Natural killer cell (primary cell): ENCODE measurements at regions of chr10 and their contacts with region 1.

Region 1: GRCh38 chr10:35126530-35127296 is at the start of gene CREM:
- DNase-seq: peak; percentile 98 to 99
- ATAC-seq: peak; percentile 81 to 94 (median 83)
- H3K4me3 ChIP-seq: peak within 1 kb of the TSS; percentile 98
- H3K4me3 Mint-ChIP-seq: peak within 1 kb of the TSS; percentile 93
- H3K27ac ChIP-seq: peak within 1 kb of the TSS; percentile 98
- H3K27ac Mint-ChIP-seq: peak within 1 kb of the TSS; percentile 97 to 98
- H3K4me1 ChIP-seq: peaks cover 21% of the 10 kb centered on the region
- H3K4me1 Mint-ChIP-seq: peaks cover 24% of the 10 kb centered on the region in 2 donors
- H3K27me3 ChIP-seq: no peaks in the 10 kb centered on the region
- H3K27me3 Mint-ChIP-seq: no peaks in the 10 kb centered on the region
- CTCF ChIP-seq: peak; percentile 72
- total RNA-seq, gene CREM: 48.0 to 64.3 (median 54.6) TPM

Region 2: GRCh38 chr10:34434119-34434594 is 692.6 kb before region 1 on chr10:
- intact Hi-C with region 1: no loop called
- DNase-seq: no peak
- ATAC-seq: no peak
- H3K4me3 ChIP-seq: no peak overlapping the region
- H3K4me3 Mint-ChIP-seq: no peak overlapping the region
- H3K27ac ChIP-seq: no peak overlapping the region
- H3K27ac Mint-ChIP-seq: no peak overlapping the region
- H3K4me1 ChIP-seq: no peaks in the 10 kb centered on the region
- H3K4me1 Mint-ChIP-seq: peaks cover 9% of the 10 kb centered on the region in 2 donors
- H3K27me3 ChIP-seq: no peaks in the 10 kb centered on the region
- H3K27me3 Mint-ChIP-seq: peaks cover 11 to 24% of the 10 kb centered on the region in 2 donors
- CTCF ChIP-seq: no peak

Region 3: DNA sequence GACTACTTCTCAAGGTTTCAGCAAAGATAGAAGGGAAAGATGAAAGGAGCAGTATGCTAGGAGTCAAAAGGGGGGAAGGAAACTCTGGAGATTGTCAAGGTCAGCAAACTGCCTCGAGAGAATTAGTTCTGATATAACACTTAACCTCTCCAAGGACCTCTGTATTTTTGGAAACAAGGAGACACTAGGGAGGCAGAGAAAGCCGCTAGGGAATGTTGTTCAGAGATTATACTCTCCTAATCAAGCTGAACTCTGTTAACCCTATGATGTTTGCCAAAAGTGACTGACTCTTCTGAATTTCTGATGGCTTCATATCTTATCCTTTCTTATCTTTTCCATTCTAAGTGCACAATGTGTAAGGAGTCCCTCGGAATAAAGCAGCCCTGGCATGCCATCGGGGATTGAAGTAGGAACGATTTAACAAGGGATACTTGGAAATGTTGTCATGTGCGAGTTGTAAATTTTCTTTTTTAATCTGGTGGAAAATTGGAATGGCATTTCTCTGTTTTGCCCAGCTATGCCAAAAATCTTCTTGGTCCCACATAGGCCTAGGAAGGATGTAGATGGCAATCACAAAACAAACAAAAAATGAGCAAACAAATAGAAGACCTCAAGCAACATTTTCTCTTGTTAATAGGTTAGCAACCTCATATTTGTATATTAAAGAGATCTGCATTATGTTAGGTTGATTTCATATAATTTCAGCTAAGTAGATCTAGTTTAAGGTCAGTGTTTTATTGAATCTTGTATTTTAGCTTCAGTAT is 27.2 kb after region 1 on chr10:
- intact Hi-C with region 1: loop called (anchors 2 kb)
- DNase-seq: no peak
- ATAC-seq: no peak
- H3K4me3 ChIP-seq: no peak overlapping the region
- H3K4me3 Mint-ChIP-seq: no peak overlapping the region
- H3K27ac ChIP-seq: no peak overlapping the region
- H3K27ac Mint-ChIP-seq: no peak overlapping the region
- H3K4me1 ChIP-seq: peaks cover 17% of the 10 kb centered on the region
- H3K4me1 Mint-ChIP-seq: peaks cover 18 to 21% of the 10 kb centered on the region in 2 donors
- H3K27me3 ChIP-seq: no peaks in the 10 kb centered on the region
- H3K27me3 Mint-ChIP-seq: no peaks in the 10 kb centered on the region
- CTCF ChIP-seq: no peak

Region 4: GRCh38 chr10:35218339-35218955 is 91.7 kb after region 1 on chr10:
- intact Hi-C with region 1: loop called (anchors 1 kb)
- DNase-seq: peak; percentile 73 to 94
- ATAC-seq: peak; percentile 53 to 80 (median 68)
- H3K4me3 ChIP-seq: no peak overlapping the region
- H3K4me3 Mint-ChIP-seq: peak overlapping the region; percentile 81
- H3K27ac ChIP-seq: peak overlapping the region; percentile 46
- H3K27ac Mint-ChIP-seq: peak overlapping the region; percentile 91 to 96
- H3K4me1 ChIP-seq: peaks cover 35% of the 10 kb centered on the region
- H3K4me1 Mint-ChIP-seq: peaks cover 40 to 42% of the 10 kb centered on the region in 2 donors
- H3K27me3 ChIP-seq: no peaks in the 10 kb centered on the region
- H3K27me3 Mint-ChIP-seq: no peaks in the 10 kb centered on the region
- CTCF ChIP-seq: peak; percentile 77

Region 5: DNA sequence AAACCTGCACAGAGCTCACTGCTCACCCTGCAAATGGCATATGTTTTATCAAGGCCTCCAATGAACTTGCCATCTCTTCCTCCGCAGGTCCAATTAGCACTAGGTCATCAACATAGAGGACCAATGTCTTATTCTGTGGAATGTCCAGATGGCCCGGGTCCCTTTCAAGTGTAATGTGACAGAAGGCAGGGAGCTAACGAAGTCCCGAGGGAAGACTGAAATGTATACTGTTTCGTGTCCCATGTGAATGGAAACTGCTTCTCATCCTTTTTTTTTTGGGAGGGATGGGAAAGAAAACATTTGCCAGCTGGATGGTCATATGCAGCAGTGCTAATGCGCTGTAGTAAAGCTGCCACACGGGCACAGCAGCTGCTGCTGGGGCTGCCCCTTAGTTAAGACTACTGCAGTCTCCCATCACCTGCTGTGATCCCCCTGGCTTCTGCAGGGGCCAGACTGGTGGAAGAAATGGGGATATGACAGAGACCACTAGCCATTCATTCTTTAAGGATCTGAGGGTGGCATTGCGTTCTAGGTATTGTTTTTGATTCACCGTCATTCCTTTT is 147.9 kb after region 1 on chr10:
- intact Hi-C with region 1: no loop called
- DNase-seq: no peak
- ATAC-seq: no peak
- H3K4me3 ChIP-seq: no peak overlapping the region
- H3K4me3 Mint-ChIP-seq: no peak overlapping the region
- H3K27ac ChIP-seq: no peak overlapping the region
- H3K27ac Mint-ChIP-seq: no peak overlapping the region
- H3K4me1 ChIP-seq: no peaks in the 10 kb centered on the region
- H3K4me1 Mint-ChIP-seq: no peaks in the 10 kb centered on the region
- H3K27me3 ChIP-seq: no peaks in the 10 kb centered on the region
- H3K27me3 Mint-ChIP-seq: peaks cover 0 to 7% of the 10 kb centered on the region in 2 donors
- CTCF ChIP-seq: no peak

Region 6: DNA sequence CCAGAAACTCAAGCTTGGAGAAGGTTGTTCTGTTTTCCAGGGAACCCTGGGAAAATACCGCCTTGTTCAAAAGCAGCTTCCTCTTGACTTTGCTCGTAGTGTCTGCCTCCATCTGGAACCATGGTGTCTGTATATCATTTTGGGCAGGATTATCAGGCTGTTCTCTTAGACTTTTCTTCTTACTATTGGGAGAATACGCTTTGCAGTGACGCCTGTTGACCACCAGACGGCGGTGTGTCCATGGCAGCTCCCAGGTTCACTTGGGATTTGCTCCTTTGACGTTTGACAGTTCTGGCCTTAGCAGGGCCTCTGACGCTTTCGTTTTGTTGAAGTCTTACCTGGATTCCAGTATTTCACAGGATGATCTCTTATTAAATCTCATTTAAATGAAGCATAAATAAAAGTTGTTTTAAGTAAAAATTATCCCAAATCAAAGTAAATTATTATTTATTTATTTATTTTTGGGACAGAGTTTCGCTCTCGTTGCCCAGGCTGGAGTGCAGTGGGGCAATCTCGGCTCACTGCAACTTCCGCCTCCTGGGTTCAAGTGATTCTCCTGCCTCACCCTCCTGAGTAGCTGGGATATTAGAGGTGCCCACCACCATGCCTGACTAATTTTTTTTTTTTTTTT is 436.7 kb after region 1 on chr10:
- intact Hi-C with region 1: loop called (anchors 2 kb)
- DNase-seq: peak; percentile 23 to 72
- ATAC-seq: peak; percentile 61 to 78 (median 67)
- H3K4me3 ChIP-seq: no peak overlapping the region
- H3K4me3 Mint-ChIP-seq: no peak overlapping the region
- H3K27ac ChIP-seq: no peak overlapping the region
- H3K27ac Mint-ChIP-seq: no peak overlapping the region
- H3K4me1 ChIP-seq: peaks cover 8% of the 10 kb centered on the region
- H3K4me1 Mint-ChIP-seq: peaks cover 5 to 22% of the 10 kb centered on the region in 2 donors
- H3K27me3 ChIP-seq: no peaks in the 10 kb centered on the region
- H3K27me3 Mint-ChIP-seq: no peaks in the 10 kb centered on the region
- CTCF ChIP-seq: peak; percentile 95